ENCODE measurements at regions of chr4 and their contacts with region 1.

Region 1: GRCh38 chr4:150217192-150217591 is 138.9 kb downstream of the DCLK2 start:
- DNase-seq: peak in 30 of 42 donors; percentile 10 to 85 (median 54)

Region 2: GRCh38 chr4:150078637-150079581 is 138.3 kb before region 1 on chr4:
- intact Hi-C with region 1: loop called (anchors 10 kb)
- DNase-seq: peak in 39 of 42 donors; percentile 15 to 68 (median 44)

Measured in head of caudate nucleus (tissue), 42 donors.